K562 (cell line): ENCODE measurements at regions of chr2 and their contacts with region 1.

Region 1: DNA sequence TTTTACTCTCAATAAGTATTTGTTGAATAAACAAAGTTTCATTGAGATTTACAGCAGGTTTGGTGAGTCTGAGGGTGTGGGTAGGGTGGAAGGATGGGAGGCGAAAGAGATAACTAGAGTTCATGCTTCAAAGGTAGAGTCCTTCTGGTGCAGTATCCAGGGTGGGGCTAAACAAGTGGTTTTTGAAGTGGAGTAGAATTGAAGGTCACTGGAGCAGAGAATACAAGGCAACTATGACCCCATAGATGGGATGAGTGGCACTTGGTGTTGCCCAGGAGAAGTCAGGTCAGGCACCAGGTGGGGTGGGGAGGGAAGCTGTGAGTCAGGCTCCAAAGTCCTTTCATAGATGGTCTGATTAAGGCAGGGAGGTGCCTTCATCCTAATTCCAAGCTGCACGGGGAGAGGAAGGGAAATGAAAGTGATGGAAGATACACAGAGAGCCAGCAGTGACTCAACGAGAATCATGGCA is 6.6 kb upstream of the CAB39 start:
- DNase-seq: no peak
- ATAC-seq: no peak; the same call in 2 of the 3 replicates
- H3K4me3 ChIP-seq: no peak overlapping the region
- H3K27ac ChIP-seq: no peak overlapping the region
- H3K4me1 ChIP-seq: peaks cover 0 to 2% of the 10 kb centered on the region in 2 experiments; a peak in 2 of 5 replicates
- H3K27me3 ChIP-seq: no peaks in the 10 kb centered on the region
- CTCF ChIP-seq: no peak
- EP300 ChIP-seq: no peak
- POLR2A ChIP-seq: no peak
- RAD21 ChIP-seq: no peak

Region 2: DNA sequence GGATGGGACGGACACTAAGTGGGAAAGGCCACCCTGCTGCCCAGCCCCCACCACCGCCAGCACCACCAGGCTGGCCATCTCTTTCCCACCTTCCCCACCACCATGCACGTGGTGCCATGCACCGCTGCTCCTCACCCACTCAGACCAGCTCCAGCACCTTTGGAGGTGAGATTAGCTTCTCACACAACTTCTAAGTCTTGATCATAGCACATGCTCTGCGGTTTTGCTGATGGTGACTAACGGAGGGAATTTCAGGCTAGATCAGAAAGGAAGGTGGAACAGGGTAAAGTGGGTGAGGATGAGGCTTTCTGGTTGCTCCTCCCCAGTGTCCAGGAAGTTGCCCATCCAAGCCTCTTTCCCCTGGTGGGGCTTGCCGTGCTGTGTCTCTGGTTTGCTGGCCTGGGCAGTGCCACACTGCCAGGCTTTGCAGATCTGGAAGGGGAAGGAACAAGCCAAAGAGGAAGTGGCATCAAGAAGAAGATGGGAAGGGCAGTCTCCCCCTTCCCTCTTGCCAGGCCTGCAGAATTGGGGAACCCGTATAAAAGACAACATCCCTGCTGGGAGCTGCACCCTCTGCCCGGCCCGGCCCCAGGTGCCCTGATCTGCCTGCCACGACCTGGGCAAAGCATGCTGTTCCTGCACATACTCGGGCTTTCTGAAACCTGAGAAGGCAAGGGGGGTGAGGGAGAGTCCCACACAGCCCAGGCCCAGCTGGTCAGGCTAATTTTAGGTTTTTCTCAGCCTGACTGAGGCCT is 37.7 kb before region 1 on chr2:
- CTCF ChIA-PET with region 1: no interaction called
- POLR2A ChIA-PET with region 1: no interaction called
- in situ Hi-C with region 1: loop called (anchors 5 kb)
- intact Hi-C with region 1: no loop called
- DNase-seq: no peak
- ATAC-seq: no peak
- H3K4me3 ChIP-seq: no peak overlapping the region
- H3K27ac ChIP-seq: peak overlapping the region; percentile 72; the same call in 1 of the 3 replicates
- H3K4me1 ChIP-seq: peaks cover 17 to 32% of the 10 kb centered on the region in 2 experiments
- H3K27me3 ChIP-seq: no peaks in the 10 kb centered on the region
- CTCF ChIP-seq: no peak
- EP300 ChIP-seq: no peak
- POLR2A ChIP-seq: no peak
- RAD21 ChIP-seq: no peak

Region 3: GRCh38 chr2:231029563-231029962 is 323.5 kb after region 1 on chr2:
- CTCF ChIA-PET with region 1: no interaction called
- POLR2A ChIA-PET with region 1: no interaction called
- in situ Hi-C with region 1: no loop called
- intact Hi-C with region 1: no loop called
- DNase-seq: no peak
- ATAC-seq: no peak
- H3K4me3 ChIP-seq: no peak overlapping the region
- H3K27ac ChIP-seq: no peak overlapping the region
- H3K4me1 ChIP-seq: no peaks in the 10 kb centered on the region
- H3K27me3 ChIP-seq: peaks cover 0 to 18% of the 10 kb centered on the region in 2 experiments; a peak in 2 of 5 replicates
- CTCF ChIP-seq: no peak
- EP300 ChIP-seq: no peak
- POLR2A ChIP-seq: no peak
- RAD21 ChIP-seq: no peak